Activated CD8-positive, alpha-beta T cell treated with anti-CD3 and anti-CD28 coated beads for 36 hours (primary cell): ENCODE measurements at regions of chr20 and their contacts with region 1.

Region 1: DNA sequence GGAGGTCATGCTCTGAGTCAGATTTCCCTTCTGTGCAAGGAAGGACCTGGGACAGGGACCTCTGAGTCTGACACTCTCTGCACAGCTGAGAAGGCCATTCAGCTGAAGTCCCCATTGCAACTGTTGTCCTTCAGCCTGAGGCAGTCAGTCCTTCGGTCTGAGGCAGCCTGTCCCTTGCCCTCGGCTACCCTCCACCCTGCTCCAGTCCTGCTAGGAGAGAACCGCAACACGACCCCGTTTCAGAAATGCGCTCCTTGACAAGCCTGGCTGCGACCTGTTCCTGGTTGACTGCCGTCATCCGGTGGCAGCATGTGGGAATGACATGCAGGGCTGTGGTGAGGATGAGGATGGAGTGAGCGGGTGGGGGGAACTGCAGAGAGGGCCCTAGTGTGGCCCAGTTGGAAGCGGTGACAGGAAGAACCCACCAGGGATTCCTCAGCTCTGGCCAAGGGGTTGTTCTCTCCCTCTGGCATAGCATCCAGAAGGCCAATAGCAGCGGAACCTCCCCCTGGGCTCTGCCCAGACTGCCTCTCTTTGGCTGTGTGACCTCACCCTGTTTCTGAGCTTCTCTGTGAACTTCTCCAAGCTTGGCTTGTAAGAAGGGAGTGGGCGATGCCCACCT is 40.3 kb upstream of the ANGPT4 start:
- DNase-seq: peak; percentile 84
- ATAC-seq: peak; percentile 97
- H3K4me3 Mint-ChIP-seq: no peak overlapping the region
- H3K27ac Mint-ChIP-seq: no peak overlapping the region
- H3K4me1 Mint-ChIP-seq: no peaks in the 10 kb centered on the region
- H3K27me3 Mint-ChIP-seq: peaks cover 26% of the 10 kb centered on the region
- CTCF ChIP-seq: peak; percentile 98

Region 2: DNA sequence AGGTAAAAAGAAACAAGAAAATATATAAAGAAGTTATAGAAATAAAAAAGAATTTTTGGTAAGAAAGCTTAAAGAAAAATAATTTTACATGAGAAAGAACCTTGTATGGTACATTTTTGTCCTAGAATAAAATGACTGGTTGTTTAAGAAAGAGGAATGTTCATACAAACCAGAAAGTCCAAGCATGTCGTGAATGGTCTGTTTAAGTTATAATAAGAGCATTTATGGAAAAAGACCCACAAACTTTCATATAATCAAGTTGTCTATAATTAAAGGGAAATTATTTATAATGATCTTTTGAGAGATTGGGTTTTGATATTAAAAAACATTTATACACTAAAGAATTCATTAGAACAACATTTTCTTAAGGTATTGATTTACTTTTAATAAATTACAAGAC is 150.7 kb before region 1 on chr20:
- CTCF ChIA-PET with region 1: interaction called, 42 read pairs
- POLR2A ChIA-PET with region 1: no interaction called
- intact Hi-C with region 1: no loop called
- DNase-seq: no peak
- ATAC-seq: no peak
- H3K4me3 Mint-ChIP-seq: no peak overlapping the region
- H3K27ac Mint-ChIP-seq: no peak overlapping the region
- H3K4me1 Mint-ChIP-seq: no peaks in the 10 kb centered on the region
- H3K27me3 Mint-ChIP-seq: peaks cover 2% of the 10 kb centered on the region
- CTCF ChIP-seq: no peak

Region 3: GRCh38 chr20:833450-834150 is 122.8 kb before region 1 on chr20 and contains the start of gene FAM110A:
- CTCF ChIA-PET with region 1: interaction called, 32 read pairs
- POLR2A ChIA-PET with region 1: no interaction called
- intact Hi-C with region 1: no loop called
- DNase-seq: peak; percentile 97
- ATAC-seq: peak; percentile 94
- H3K4me3 Mint-ChIP-seq: peak within 1 kb of the TSS; percentile 89
- H3K27ac Mint-ChIP-seq: peak within 1 kb of the TSS; percentile 85
- H3K4me1 Mint-ChIP-seq: peaks cover 36% of the 10 kb centered on the region
- H3K27me3 Mint-ChIP-seq: no peaks in the 10 kb centered on the region
- CTCF ChIP-seq: no peak
- total RNA-seq, gene FAM110A: 20.5 to 23.1 TPM

Region 4: GRCh38 chr20:967796-968742 is 11.6 kb after region 1 on chr20:
- CTCF ChIA-PET with region 1: interaction called, 57 read pairs
- POLR2A ChIA-PET with region 1: no interaction called
- intact Hi-C with region 1: no loop called
- DNase-seq: peak; percentile 39
- ATAC-seq: no peak
- H3K4me3 Mint-ChIP-seq: no peak overlapping the region
- H3K27ac Mint-ChIP-seq: no peak overlapping the region
- H3K4me1 Mint-ChIP-seq: no peaks in the 10 kb centered on the region
- H3K27me3 Mint-ChIP-seq: peaks cover 2% of the 10 kb centered on the region
- CTCF ChIP-seq: no peak

Region 5: DNA sequence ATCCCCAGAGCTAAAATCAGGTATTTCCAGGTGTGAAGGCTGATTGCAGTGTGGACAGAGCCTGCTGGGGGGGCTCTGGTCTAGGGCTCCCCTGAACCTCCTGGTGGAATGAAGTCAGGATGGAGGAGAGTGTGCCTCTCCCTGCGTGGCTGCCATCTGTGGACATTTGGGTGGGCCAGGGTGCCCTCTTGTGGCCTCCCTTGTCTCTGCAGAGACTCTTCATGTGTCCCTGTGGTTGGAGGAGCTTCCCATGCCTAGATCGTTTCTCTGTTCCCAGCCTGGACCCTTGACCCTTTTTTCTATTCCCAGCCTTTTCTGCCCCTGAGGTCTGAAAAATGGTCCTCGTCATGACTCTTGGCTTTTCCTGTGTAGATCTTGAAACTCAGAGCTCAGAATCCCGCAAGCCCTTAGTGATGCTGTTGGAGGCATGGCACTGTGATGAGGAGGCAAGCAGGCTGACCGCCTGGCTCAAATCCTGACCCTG is 152.0 kb after region 1 on chr20:
- CTCF ChIA-PET with region 1: interaction called, 16 read pairs
- POLR2A ChIA-PET with region 1: no interaction called
- intact Hi-C with region 1: no loop called
- DNase-seq: peak; percentile 74
- ATAC-seq: peak; percentile 87
- H3K4me3 Mint-ChIP-seq: no peak overlapping the region
- H3K27ac Mint-ChIP-seq: no peak overlapping the region
- H3K4me1 Mint-ChIP-seq: no peaks in the 10 kb centered on the region
- H3K27me3 Mint-ChIP-seq: no peaks in the 10 kb centered on the region
- CTCF ChIP-seq: peak; percentile 69